ENCODE measurements at regions of chr17 and their contacts with region 1.

Region 1: GRCh38 chr17:40536295-40537171 is 28.7 kb downstream of the CCR7 start:
- DNase-seq: peak; percentile 43 to 63 (median 59)
- H3K4me3 ChIP-seq: no peak overlapping the region
- H3K27ac ChIP-seq: peak overlapping the region; percentile 58 to 59
- H3K4me1 ChIP-seq: peaks cover 31% of the 10 kb centered on the region
- H3K27me3 ChIP-seq: no peaks in the 10 kb centered on the region
- CTCF ChIP-seq: no peak
- EP300 ChIP-seq: peak; percentile 33
- POLR2A ChIP-seq: no peak

Region 2: DNA sequence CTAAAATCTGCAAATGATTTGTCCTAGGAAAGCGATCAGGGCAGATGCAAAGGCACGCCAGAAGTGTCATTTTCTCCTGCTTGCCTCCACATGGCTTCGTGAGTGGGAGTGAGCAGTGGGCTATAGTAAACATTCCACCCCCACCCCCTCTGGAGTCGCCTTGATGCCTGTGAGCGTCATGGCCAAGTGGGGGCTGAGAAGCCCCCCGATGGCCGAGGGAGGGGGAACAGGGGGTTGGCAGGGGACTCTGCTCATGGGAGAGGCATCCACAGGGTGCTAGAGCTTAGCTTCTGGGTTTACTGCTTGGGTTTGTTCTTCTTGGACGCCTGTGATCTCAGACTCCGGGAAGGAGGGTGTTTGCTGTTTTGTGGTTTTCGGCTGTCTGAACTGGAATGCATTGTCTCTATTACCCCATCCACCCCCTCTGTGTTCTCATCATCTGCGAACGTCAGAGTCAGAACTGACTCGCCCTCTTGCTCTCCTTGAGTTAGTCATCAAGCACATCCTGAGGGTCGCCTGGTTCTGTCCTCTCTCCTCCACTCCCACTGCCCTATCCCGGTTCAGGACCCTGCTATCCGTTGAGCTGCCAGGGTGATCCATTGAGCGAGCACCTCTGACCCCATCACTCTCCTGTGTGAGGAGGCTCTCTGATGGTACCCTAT is 50.6 kb before region 1 on chr17:
- intact Hi-C with region 1: loop called in 1 of 4 experiments (anchors 10 kb)
- DNase-seq: peak; percentile 38 to 76 (median 69)
- H3K4me3 ChIP-seq: no peak overlapping the region
- H3K27ac ChIP-seq: no peak overlapping the region
- H3K4me1 ChIP-seq: peaks cover 12% of the 10 kb centered on the region
- H3K27me3 ChIP-seq: no peaks in the 10 kb centered on the region
- CTCF ChIP-seq: no peak
- EP300 ChIP-seq: no peak
- POLR2A ChIP-seq: peak; percentile 11

Region 3: DNA sequence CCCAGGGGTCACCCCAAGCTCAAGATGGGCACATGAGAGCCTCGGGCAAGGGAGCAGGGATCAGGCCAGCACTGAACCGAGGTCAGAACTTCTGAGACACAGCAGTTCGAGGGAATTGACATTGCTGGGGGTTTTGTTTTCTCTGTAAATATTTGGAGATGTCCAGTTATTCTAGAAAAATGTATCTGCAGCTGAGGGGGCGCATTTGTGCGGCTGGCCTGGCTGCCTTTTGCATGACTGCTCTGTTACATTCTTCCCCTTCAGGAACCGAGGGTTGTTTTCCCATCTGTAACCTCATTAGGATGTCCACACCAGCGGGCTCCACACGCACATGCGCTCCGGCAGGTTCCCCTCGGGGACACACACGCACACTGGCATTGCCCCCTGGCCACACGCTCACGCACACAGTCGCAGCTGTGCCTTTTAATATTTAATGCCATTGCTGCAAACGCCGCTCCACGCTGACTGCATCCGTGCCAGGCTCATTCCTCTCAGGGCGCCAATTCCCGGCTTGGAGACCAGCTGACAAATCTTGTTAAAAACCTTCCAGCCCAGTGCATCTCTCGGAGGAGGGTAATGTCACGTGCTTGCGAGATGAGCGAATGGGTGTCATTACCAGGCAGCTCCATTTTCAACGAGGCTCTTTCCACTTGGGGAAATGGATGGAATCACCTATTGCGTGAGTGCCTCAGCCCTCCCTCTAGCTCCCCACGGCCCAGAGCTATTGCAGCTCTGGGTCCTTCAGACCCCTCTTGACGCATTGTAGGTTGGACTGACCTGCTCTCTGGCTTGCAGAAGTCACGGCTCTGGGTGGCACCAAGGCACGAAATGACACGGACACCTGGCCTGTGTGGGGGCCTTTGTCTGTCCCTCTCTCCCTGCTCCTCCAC is 15.6 kb after region 1 on chr17:
- intact Hi-C with region 1: loop called in 1 of 4 experiments (anchors 2 kb)
- DNase-seq: peak in 4 of 5 donors; percentile 41 to 65 (median 58)
- H3K4me3 ChIP-seq: no peak overlapping the region
- H3K27ac ChIP-seq: peak overlapping the region; percentile 73 to 82
- H3K4me1 ChIP-seq: peaks cover 59% of the 10 kb centered on the region
- H3K27me3 ChIP-seq: no peaks in the 10 kb centered on the region
- CTCF ChIP-seq: no peak
- EP300 ChIP-seq: no peak
- POLR2A ChIP-seq: no peak

Measured in ovary (tissue), 10 donors.